Activated T-helper 1 cell treated with anti-CD3 and anti-CD28 coated beads, Interleukin-12 subunit alpha, Interleukin-12 subunit beta, Interleukin-2, Interleukin-4 antibody, amounts not matched to agents 30 ng/mL and 10 ng/mL and 1 ng/mL, durations not matched to agents 14 hours and 24 hours and 36 hours (primary cell): ENCODE measurements at regions of chr6 and their contacts with region 1.

Region 1: GRCh38 chr6:45741437-45742171 is 274.1 kb downstream of the CLIC5 start:
- DNase-seq: no peak
- H3K4me3 Mint-ChIP-seq: peak overlapping the region; percentile 2
- H3K27ac Mint-ChIP-seq: peak overlapping the region; percentile 27
- H3K4me1 Mint-ChIP-seq: peaks cover 44% of the 10 kb centered on the region
- H3K27me3 Mint-ChIP-seq: peaks cover 3% of the 10 kb centered on the region

Region 2: GRCh38 chr6:45703041-45703739 is 38.4 kb before region 1 on chr6:
- intact Hi-C with region 1: loop called (anchors 5 kb)
- DNase-seq: no peak
- H3K4me3 Mint-ChIP-seq: no peak overlapping the region
- H3K27ac Mint-ChIP-seq: peak overlapping the region; percentile 41
- H3K4me1 Mint-ChIP-seq: peaks cover 13% of the 10 kb centered on the region
- H3K27me3 Mint-ChIP-seq: no peaks in the 10 kb centered on the region

Region 3: DNA sequence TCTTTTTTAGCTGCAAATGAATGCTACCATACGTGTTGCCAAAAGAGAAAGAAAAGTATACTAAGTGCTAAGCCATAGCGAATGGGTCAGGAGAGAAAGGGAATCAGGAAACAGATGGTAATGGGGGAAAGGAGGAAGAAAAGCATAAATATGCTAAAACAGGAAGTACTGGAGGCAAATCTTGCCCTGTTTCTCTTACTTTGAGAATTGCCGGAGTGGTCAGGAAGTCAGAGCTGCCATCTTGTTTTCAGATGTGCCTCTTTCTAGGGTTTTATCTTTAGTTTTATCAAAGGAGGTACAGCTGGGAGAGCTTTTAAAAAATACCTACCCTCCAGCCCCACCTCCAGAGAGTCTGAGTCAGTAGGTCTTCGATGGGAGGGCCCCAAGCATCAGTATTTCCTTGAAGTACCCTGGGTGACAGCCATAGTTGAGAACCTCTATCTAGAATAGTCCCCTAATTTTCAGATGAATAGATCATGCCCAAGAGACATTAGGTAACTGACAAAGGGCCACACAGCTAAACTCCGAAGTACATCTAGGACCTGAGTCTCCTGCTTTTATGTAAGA is 80.7 kb after region 1 on chr6:
- intact Hi-C with region 1: loop called (anchors 2 kb)
- DNase-seq: no peak
- H3K4me3 Mint-ChIP-seq: peak overlapping the region; percentile 41
- H3K27ac Mint-ChIP-seq: peak overlapping the region; percentile 76
- H3K4me1 Mint-ChIP-seq: peaks cover 32% of the 10 kb centered on the region
- H3K27me3 Mint-ChIP-seq: no peaks in the 10 kb centered on the region

Region 4: DNA sequence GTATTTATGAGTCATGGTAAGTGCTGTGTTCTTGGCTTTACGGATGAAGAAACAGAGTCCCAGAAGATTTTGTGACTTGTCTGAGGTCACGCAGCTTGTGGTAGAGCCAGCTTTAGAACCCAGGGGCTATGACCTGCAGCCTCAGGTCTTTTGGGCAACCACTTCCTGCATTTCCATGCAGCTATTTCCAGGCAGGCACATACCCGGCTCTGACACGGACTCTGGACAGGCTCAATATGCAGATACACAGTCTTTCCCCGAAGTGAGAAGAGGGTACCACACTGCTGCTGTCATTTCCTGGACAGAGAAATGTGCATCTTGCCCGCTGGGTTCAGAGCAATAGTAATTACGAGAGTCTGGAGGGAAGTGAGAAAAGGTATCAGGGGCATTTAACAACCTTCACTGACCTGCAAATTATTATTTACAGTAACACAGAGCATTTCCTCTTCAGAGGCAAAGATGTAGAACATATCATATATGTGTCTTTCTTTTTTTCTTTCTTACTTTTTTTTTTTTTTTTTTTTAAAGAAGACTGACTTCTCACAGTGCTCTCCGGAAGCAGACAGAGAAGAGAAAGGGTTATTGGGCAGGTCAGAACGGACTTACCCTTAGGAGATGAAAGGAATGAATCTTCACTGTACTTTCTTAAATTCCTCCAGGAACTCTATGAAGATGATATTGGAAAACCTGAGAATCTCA is 89.0 kb after region 1 on chr6:
- intact Hi-C with region 1: loop called (anchors 2 kb)
- DNase-seq: peak; percentile 44
- H3K4me3 Mint-ChIP-seq: peak overlapping the region; percentile 70
- H3K27ac Mint-ChIP-seq: peak overlapping the region; percentile 85
- H3K4me1 Mint-ChIP-seq: peaks cover 47% of the 10 kb centered on the region
- H3K27me3 Mint-ChIP-seq: no peaks in the 10 kb centered on the region

Region 5: GRCh38 chr6:46684771-46685170 is 943.2 kb after region 1 on chr6:
- intact Hi-C with region 1: no loop called
- DNase-seq: no peak
- H3K4me3 Mint-ChIP-seq: no peak overlapping the region
- H3K27ac Mint-ChIP-seq: no peak overlapping the region
- H3K4me1 Mint-ChIP-seq: no peaks in the 10 kb centered on the region
- H3K27me3 Mint-ChIP-seq: peaks cover 13% of the 10 kb centered on the region